Natural killer cell (primary cell): ENCODE measurements at regions of chr15 and their contacts with region 1.

Region 1: GRCh38 chr15:90037961-90038631 is 37.0 kb downstream of the ZNF710 start:
- DNase-seq: peak; percentile 47 to 77
- ATAC-seq: peak; percentile 53 to 71 (median 59)
- H3K4me3 ChIP-seq: no peak overlapping the region
- H3K4me3 Mint-ChIP-seq: peak overlapping the region; percentile 65
- H3K27ac ChIP-seq: peak overlapping the region; percentile 30
- H3K27ac Mint-ChIP-seq: peak overlapping the region; percentile 88 to 92
- H3K4me1 ChIP-seq: peaks cover 65% of the 10 kb centered on the region
- H3K4me1 Mint-ChIP-seq: peaks cover 75% of the 10 kb centered on the region in 2 donors
- H3K27me3 ChIP-seq: no peaks in the 10 kb centered on the region
- H3K27me3 Mint-ChIP-seq: no peaks in the 10 kb centered on the region
- CTCF ChIP-seq: no peak

Region 2: DNA sequence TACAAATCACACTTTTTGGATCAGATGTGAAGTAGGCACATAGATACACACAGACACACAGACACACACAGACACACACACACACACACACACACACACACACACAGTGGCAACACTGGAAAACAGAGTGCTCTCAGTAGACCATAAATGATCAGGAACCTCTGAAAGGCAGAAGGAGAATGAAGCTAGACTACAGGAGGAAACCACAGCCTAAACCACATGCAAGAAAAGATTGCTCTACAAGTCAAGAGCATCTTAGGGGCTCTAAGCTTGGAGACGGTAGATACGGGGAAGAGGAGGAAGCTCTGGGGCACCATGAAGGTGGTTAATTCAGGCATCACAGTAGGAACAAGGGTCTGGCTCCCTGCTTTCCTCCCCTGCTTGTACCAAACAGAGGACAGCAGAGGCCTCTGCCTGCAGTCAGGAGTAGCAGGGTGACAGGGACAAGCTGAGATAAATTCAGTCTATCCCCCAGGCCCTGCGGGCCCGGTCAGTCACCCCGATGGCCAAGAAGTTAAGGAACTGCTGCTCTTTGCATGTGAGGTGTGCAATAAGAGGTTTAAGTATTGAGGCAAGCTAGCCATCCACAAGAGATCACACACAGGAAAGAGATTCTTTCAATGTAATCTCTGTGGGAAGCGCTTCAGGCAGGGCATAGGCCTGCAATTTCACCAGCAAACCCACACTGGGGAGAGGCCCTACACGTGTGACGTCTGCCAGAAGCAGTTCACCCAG is 101.9 kb before region 1 on chr15:
- intact Hi-C with region 1: loop called (anchors 1 kb)
- DNase-seq: peak in 1 of 2 donors; percentile 63
- ATAC-seq: peak; percentile 80 to 89 (median 89)
- H3K4me3 ChIP-seq: no peak overlapping the region
- H3K4me3 Mint-ChIP-seq: peak overlapping the region; percentile 52
- H3K27ac ChIP-seq: peak overlapping the region; percentile 66
- H3K27ac Mint-ChIP-seq: peak overlapping the region; percentile 72 to 85
- H3K4me1 ChIP-seq: peaks cover 25% of the 10 kb centered on the region
- H3K4me1 Mint-ChIP-seq: peaks cover 31% of the 10 kb centered on the region in 2 donors
- H3K27me3 ChIP-seq: no peaks in the 10 kb centered on the region
- H3K27me3 Mint-ChIP-seq: no peaks in the 10 kb centered on the region
- CTCF ChIP-seq: no peak

Region 3: GRCh38 chr15:90015749-90016148 is 22.3 kb before region 1 on chr15:
- intact Hi-C with region 1: loop called (anchors 2 kb)
- DNase-seq: no peak
- ATAC-seq: no peak
- H3K4me3 ChIP-seq: no peak overlapping the region
- H3K4me3 Mint-ChIP-seq: no peak overlapping the region
- H3K27ac ChIP-seq: no peak overlapping the region
- H3K27ac Mint-ChIP-seq: no peak overlapping the region
- H3K4me1 ChIP-seq: peaks cover 34% of the 10 kb centered on the region
- H3K4me1 Mint-ChIP-seq: peaks cover 41 to 51% of the 10 kb centered on the region in 2 donors
- H3K27me3 ChIP-seq: no peaks in the 10 kb centered on the region
- H3K27me3 Mint-ChIP-seq: no peaks in the 10 kb centered on the region
- CTCF ChIP-seq: no peak

Region 4: GRCh38 chr15:90071208-90071807 is 33.2 kb after region 1 on chr15:
- intact Hi-C with region 1: loop called (anchors 5 kb)
- DNase-seq: peak; percentile 74 to 90
- ATAC-seq: peak; percentile 93 to 99 (median 98)
- H3K4me3 ChIP-seq: no peak overlapping the region
- H3K4me3 Mint-ChIP-seq: no peak overlapping the region
- H3K27ac ChIP-seq: no peak overlapping the region
- H3K27ac Mint-ChIP-seq: peak overlapping the region in 1 of 2 donors; percentile 27
- H3K4me1 ChIP-seq: peaks cover 3% of the 10 kb centered on the region
- H3K4me1 Mint-ChIP-seq: peaks cover 4 to 15% of the 10 kb centered on the region in 2 donors
- H3K27me3 ChIP-seq: no peaks in the 10 kb centered on the region
- H3K27me3 Mint-ChIP-seq: no peaks in the 10 kb centered on the region
- CTCF ChIP-seq: peak; percentile 83

Region 5: GRCh38 chr15:90233376-90234095 is 195.4 kb after region 1 on chr15 and contains the start of gene CIB1:
- intact Hi-C with region 1: loop called (anchors 5 kb)
- DNase-seq: peak; percentile 66 to 95
- ATAC-seq: peak; percentile 79 to 93 (median 81)
- H3K4me3 ChIP-seq: peak within 1 kb of the TSS; percentile 84
- H3K4me3 Mint-ChIP-seq: peak within 1 kb of the TSS; percentile 90
- H3K27ac ChIP-seq: peak within 1 kb of the TSS; percentile 95
- H3K27ac Mint-ChIP-seq: peak within 1 kb of the TSS; percentile 99
- H3K4me1 ChIP-seq: peaks cover 47% of the 10 kb centered on the region
- H3K4me1 Mint-ChIP-seq: peaks cover 44 to 53% of the 10 kb centered on the region in 2 donors
- H3K27me3 ChIP-seq: no peaks in the 10 kb centered on the region
- H3K27me3 Mint-ChIP-seq: no peaks in the 10 kb centered on the region
- CTCF ChIP-seq: no peak
- total RNA-seq, gene CIB1: 136 to 209 (median 154) TPM